PC-9 (cell line): ENCODE measurements at regions of chr5 and their contacts with region 1.

Region 1: GRCh38 chr5:171484460-171484899 is 65.0 kb downstream of the FGF18 start:
- DNase-seq: peak in 1 of 2 experiments; percentile 46
- H3K4me3 ChIP-seq: no peak overlapping the region
- H3K27ac ChIP-seq: no peak overlapping the region
- H3K4me1 ChIP-seq: 0 out of 2 replicates have a peak, but pooled peaks cover 4% of the 10 kb centered on the region
- H3K27me3 ChIP-seq: no peaks in the 10 kb centered on the region
- CTCF ChIP-seq: peak; percentile 97

Region 2: GRCh38 chr5:171336521-171337209 is 147.8 kb before region 1 on chr5:
- CTCF ChIA-PET with region 1: no interaction called
- POLR2A ChIA-PET with region 1: no interaction called
- intact Hi-C with region 1: no loop called
- DNase-seq: peak; percentile 46 to 62
- H3K4me3 ChIP-seq: peak overlapping the region; percentile 48
- H3K27ac ChIP-seq: no peak overlapping the region
- H3K4me1 ChIP-seq: 0 out of 2 replicates have a peak, but pooled peaks cover 6% of the 10 kb centered on the region
- H3K27me3 ChIP-seq: no peaks in the 10 kb centered on the region
- CTCF ChIP-seq: peak; percentile 78

Region 3: DNA sequence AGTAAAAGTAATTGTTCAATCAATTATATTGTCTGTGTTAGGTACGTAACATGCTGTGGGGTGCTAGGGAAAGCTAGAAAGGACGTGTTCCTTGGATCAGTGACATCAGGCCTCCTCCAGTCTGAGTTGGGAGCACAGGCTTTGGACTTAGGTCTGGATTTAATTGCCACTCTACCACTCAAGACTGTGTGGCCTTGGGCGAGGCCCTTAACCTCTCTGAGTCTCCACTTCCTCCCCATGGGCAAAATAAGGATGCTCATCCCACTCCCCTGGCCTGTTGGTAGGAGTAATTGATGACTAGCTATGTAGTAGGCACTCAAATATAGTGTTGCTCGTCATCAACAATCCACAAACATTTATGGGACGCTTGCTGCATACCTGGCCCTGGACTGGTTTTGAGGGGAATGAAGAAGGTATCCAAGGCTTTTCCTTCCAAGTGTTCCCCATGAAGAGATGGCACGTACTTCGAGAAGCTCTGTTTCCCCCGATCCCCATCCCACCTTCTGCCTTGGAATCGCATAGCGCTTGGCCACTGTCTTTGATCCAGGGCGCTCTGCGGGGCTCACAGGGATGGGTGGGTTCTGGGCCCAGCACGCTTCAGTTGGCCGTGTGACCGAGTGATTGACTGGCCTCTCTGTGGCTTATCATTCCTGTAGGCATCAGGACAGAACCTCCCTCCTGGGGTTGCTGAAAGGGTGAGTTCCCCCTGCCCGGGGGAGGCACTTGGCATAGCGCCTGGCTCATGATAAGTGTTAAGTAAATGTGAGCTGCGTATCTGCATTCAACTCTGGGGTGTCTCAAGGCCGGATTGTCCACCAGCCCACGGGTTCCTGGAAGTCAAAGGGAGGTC is 56.9 kb before region 1 on chr5:
- CTCF ChIA-PET with region 1: no interaction called
- POLR2A ChIA-PET with region 1: no interaction called
- intact Hi-C with region 1: no loop called
- DNase-seq: no peak
- H3K4me3 ChIP-seq: no peak overlapping the region
- H3K27ac ChIP-seq: no peak overlapping the region
- H3K4me1 ChIP-seq: 0 out of 2 replicates have a peak, but pooled peaks cover 5% of the 10 kb centered on the region
- H3K27me3 ChIP-seq: no peaks in the 10 kb centered on the region
- CTCF ChIP-seq: no peak

Region 4: GRCh38 chr5:171450423-171451331 is 33.8 kb before region 1 on chr5:
- CTCF ChIA-PET with region 1: no interaction called
- POLR2A ChIA-PET with region 1: no interaction called
- intact Hi-C with region 1: loop called (anchors 1 kb)
- DNase-seq: no peak
- H3K4me3 ChIP-seq: no peak overlapping the region; the same call in 1 of the 2 replicates
- H3K27ac ChIP-seq: no peak overlapping the region
- H3K4me1 ChIP-seq: no peaks in the 10 kb centered on the region
- H3K27me3 ChIP-seq: no peaks in the 10 kb centered on the region
- CTCF ChIP-seq: no peak

Region 5: GRCh38 chr5:171863930-171864329 is 379.4 kb after region 1 on chr5:
- CTCF ChIA-PET with region 1: no interaction called
- POLR2A ChIA-PET with region 1: no interaction called
- intact Hi-C with region 1: loop called (anchors 5 kb)
- DNase-seq: no peak
- H3K4me3 ChIP-seq: no peak overlapping the region
- H3K27ac ChIP-seq: no peak overlapping the region
- H3K4me1 ChIP-seq: no peaks in the 10 kb centered on the region
- H3K27me3 ChIP-seq: no peaks in the 10 kb centered on the region
- CTCF ChIP-seq: no peak